H1 (cell line): ENCODE measurements at regions of chrX and their contacts with region 1.

Region 1: DNA sequence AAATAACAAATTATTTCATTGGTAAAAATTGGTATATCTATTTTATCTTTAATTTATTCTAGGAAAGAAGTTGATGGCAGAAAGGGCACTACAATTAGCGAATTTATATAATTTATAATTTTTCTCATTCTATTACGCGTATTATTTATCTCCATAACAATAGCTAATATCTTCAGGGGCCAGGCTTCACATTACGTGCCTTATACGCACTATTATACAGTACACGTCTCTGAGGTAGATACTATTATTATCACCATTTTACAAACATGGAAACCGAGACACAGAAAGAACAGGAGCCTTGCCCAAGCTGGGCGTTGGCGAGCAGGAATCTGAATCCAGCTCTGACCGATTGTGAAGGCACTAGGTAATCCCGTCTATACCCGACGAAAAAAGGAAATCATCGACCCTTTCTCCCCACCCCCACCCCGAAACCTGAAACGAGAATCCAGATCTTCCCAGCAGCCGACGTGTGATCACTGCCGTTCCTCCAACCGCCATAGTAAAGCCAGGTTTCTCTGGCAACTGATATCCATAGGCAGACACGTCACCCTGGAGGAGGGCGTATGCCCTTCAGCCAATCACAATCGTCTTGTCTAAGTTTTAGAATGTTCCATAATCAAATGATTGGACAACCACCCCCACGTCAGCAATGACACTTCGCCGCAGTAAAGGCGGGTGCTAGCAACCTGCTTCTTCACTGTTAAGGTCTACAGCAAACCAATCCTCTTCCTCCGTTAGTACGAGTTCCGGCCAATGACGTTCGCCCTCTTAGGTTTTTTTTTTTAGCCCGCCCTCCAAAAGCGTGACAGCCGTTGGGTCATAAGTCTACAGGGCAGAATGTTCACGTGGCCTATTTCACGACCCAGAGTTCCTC is at the start of gene MORF4L2:
- DNase-seq: peak; percentile 62 to 90
- H3K4me3 ChIP-seq: peak within 1 kb of the TSS; percentile 80 to 99 (median 86)
- H3K27ac ChIP-seq: peak within 1 kb of the TSS; percentile 93
- H3K4me1 ChIP-seq: peaks cover 0 to 2% (median 0%) of the 10 kb centered on the region in 4 experiments; a peak in 1 of 7 replicates
- H3K27me3 ChIP-seq: no peaks in the 10 kb centered on the region
- CTCF ChIP-seq: no peak
- EP300 ChIP-seq: peak in 1 of 2 experiments; percentile 69; a peak in 1 of 3 replicates
- POLR2A ChIP-seq: peak; percentile 83 to 97
- RAD21 ChIP-seq: no peak
- total RNA-seq, gene MORF4L2: 340 and 373 TPM in 2 replicates

Region 2: DNA sequence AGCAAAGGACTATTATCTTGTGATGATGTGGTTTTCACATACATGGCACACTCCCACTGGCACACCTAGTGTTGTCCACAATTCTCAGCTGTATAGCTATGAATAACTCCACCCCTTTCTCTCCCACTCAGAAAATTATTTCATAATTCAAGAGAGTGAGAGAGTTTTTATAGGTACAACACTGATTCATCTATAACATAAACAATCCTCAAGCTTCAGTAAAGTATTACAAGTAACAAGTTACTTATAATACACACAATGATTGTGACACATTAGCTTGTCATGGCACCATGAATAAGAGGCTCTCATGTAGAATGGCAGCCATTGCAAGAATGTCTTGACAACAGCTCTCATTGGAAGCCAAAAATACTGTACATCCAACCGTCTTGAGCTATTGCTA is 211.1 kb before region 1 on chrX:
- CTCF ChIA-PET with region 1: no interaction called
- POLR2A ChIA-PET with region 1: no interaction called
- DNase-seq: no peak
- H3K4me3 ChIP-seq: no peak overlapping the region
- H3K27ac ChIP-seq: no peak overlapping the region
- H3K4me1 ChIP-seq: no peaks in the 10 kb centered on the region
- H3K27me3 ChIP-seq: no peaks in the 10 kb centered on the region
- CTCF ChIP-seq: no peak
- EP300 ChIP-seq: no peak
- POLR2A ChIP-seq: no peak
- RAD21 ChIP-seq: no peak

Region 3: GRCh38 chrX:103637604-103638338 is 48.7 kb before region 1 on chrX:
- CTCF ChIA-PET with region 1: no interaction called
- POLR2A ChIA-PET with region 1: no interaction called
- DNase-seq: no peak
- H3K4me3 ChIP-seq: no peak overlapping the region
- H3K27ac ChIP-seq: no peak overlapping the region
- H3K4me1 ChIP-seq: peaks cover 0 to 4% (median 0%) of the 10 kb centered on the region in 4 experiments; a peak in 1 of 7 replicates
- H3K27me3 ChIP-seq: no peaks in the 10 kb centered on the region
- CTCF ChIP-seq: no peak
- EP300 ChIP-seq: no peak
- POLR2A ChIP-seq: no peak
- RAD21 ChIP-seq: no peak

Region 4: DNA sequence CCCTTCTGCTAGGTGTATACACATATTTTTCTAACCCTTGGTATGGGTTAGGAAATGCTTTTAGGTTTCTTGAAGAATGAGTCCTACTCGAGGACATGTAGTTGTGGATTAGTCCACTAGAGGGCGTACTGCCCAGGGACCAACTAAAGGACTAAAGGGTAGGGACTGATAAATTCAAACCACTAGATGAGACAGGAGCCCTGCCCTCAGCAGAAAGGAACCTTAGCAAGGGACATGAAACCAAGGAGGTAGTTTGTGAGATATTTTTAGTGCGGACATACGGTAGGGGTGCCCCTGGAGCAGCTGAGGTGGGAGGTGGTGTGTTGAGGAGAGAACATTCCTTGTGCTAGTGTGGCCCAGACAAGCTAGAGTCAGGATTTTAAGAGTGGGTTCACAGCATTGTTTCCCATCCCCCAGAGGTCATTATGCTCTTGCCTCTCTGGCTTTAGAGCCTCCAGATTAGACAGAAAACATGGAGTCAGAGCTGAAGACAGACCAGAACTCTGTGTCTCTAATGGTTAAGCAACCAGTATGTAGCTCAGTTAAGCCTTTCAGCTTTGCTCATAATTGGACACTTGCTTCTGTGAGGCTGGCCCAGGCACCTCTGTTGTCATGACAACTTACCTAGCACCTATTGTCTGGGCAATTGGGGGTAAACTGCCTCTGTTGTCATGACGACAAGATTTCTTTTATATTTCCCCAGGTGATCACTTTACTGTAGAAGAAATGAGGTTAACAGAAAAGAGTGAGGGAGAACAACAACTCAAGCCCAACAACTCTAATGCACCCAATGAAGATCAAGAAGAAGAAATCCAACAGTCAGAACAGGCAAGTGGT is 25.3 kb after region 1 on chrX:
- CTCF ChIA-PET with region 1: interaction called, 12 read pairs
- POLR2A ChIA-PET with region 1: interaction called, 5 read pairs
- DNase-seq: peak in 1 of 2 experiments; percentile 78
- H3K4me3 ChIP-seq: no peak overlapping the region
- H3K27ac ChIP-seq: peak overlapping the region; percentile 62; the same call in 1 of the 2 replicates
- H3K4me1 ChIP-seq: peaks cover 0 to 6% (median 3%) of the 10 kb centered on the region in 4 experiments; a peak in 5 of 7 replicates
- H3K27me3 ChIP-seq: no peaks in the 10 kb centered on the region
- CTCF ChIP-seq: peak in 2 of 3 experiments; percentile 51 to 70; a peak in 3 of 4 replicates
- EP300 ChIP-seq: no peak
- POLR2A ChIP-seq: no peak
- RAD21 ChIP-seq: peak; percentile 61 to 70

Region 5: GRCh38 chrX:103774070-103774642 is 87.7 kb after region 1 on chrX:
- CTCF ChIA-PET with region 1: interaction called, 18 read pairs
- POLR2A ChIA-PET with region 1: interaction called, 6 read pairs
- DNase-seq: no peak
- H3K4me3 ChIP-seq: no peak overlapping the region
- H3K27ac ChIP-seq: no peak overlapping the region
- H3K4me1 ChIP-seq: no peaks in the 10 kb centered on the region; a peak in 2 of 7 replicates
- H3K27me3 ChIP-seq: no peaks in the 10 kb centered on the region
- CTCF ChIP-seq: peak; percentile 9 to 36 (median 29)
- EP300 ChIP-seq: no peak
- POLR2A ChIP-seq: no peak
- RAD21 ChIP-seq: peak; percentile 61 to 67

Region 6: GRCh38 chrX:103864886-103865534 is 178.6 kb after region 1 on chrX:
- CTCF ChIA-PET with region 1: no interaction called
- POLR2A ChIA-PET with region 1: no interaction called
- DNase-seq: no peak
- H3K4me3 ChIP-seq: no peak overlapping the region
- H3K27ac ChIP-seq: no peak overlapping the region
- H3K4me1 ChIP-seq: no peaks in the 10 kb centered on the region
- H3K27me3 ChIP-seq: no peaks in the 10 kb centered on the region
- CTCF ChIP-seq: no peak
- EP300 ChIP-seq: no peak
- POLR2A ChIP-seq: no peak
- RAD21 ChIP-seq: no peak